Caco-2 (cell line): ENCODE measurements at regions of chr17 and their contacts with region 1.

Region 1: GRCh38 chr17:38617011-38617867 is 11.5 kb upstream of the SRCIN1 start:
- DNase-seq: no peak
- H3K4me3 ChIP-seq: no peak overlapping the region
- H3K4me3 Mint-ChIP-seq: no peak overlapping the region
- H3K27ac Mint-ChIP-seq: no peak overlapping the region
- H3K4me1 ChIP-seq: peaks cover 28% of the 10 kb centered on the region
- H3K4me1 Mint-ChIP-seq: peaks cover 36% of the 10 kb centered on the region
- H3K27me3 ChIP-seq: no peaks in the 10 kb centered on the region
- H3K27me3 Mint-ChIP-seq: no peaks in the 10 kb centered on the region
- CTCF ChIP-seq: peak in 1 of 2 experiments; percentile 13

Region 2: GRCh38 chr17:38598536-38598935 is 18.7 kb before region 1 on chr17:
- CTCF ChIA-PET with region 1: interaction called, 3 read pairs
- POLR2A ChIA-PET with region 1: interaction called, 14 read pairs
- intact Hi-C with region 1: loop called (anchors 1 kb)
- DNase-seq: peak; percentile 96
- H3K4me3 ChIP-seq: no peak overlapping the region
- H3K4me3 Mint-ChIP-seq: no peak overlapping the region
- H3K27ac Mint-ChIP-seq: peak overlapping the region; percentile 72
- H3K4me1 ChIP-seq: peaks cover 41% of the 10 kb centered on the region
- H3K4me1 Mint-ChIP-seq: peaks cover 35% of the 10 kb centered on the region
- H3K27me3 ChIP-seq: no peaks in the 10 kb centered on the region
- H3K27me3 Mint-ChIP-seq: no peaks in the 10 kb centered on the region
- CTCF ChIP-seq: no peak

Region 3: GRCh38 chr17:38605888-38606645 is 11.2 kb before region 1 on chr17 and contains the start of gene SRCIN1:
- CTCF ChIA-PET with region 1: interaction called, 14 read pairs
- POLR2A ChIA-PET with region 1: interaction called, 14 read pairs
- intact Hi-C with region 1: no loop called
- DNase-seq: peak; percentile 81 to 86
- H3K4me3 ChIP-seq: peak within 1 kb of the TSS; percentile 87
- H3K4me3 Mint-ChIP-seq: peak within 1 kb of the TSS; percentile 84
- H3K27ac Mint-ChIP-seq: peak within 1 kb of the TSS; percentile 91
- H3K4me1 ChIP-seq: peaks cover 32% of the 10 kb centered on the region
- H3K4me1 Mint-ChIP-seq: peaks cover 32% of the 10 kb centered on the region
- H3K27me3 ChIP-seq: no peaks in the 10 kb centered on the region
- H3K27me3 Mint-ChIP-seq: no peaks in the 10 kb centered on the region
- CTCF ChIP-seq: peak; percentile 98 to 100
- total RNA-seq, gene SRCIN1: 23.6 and 25.8 TPM in 2 replicates

Region 4: DNA sequence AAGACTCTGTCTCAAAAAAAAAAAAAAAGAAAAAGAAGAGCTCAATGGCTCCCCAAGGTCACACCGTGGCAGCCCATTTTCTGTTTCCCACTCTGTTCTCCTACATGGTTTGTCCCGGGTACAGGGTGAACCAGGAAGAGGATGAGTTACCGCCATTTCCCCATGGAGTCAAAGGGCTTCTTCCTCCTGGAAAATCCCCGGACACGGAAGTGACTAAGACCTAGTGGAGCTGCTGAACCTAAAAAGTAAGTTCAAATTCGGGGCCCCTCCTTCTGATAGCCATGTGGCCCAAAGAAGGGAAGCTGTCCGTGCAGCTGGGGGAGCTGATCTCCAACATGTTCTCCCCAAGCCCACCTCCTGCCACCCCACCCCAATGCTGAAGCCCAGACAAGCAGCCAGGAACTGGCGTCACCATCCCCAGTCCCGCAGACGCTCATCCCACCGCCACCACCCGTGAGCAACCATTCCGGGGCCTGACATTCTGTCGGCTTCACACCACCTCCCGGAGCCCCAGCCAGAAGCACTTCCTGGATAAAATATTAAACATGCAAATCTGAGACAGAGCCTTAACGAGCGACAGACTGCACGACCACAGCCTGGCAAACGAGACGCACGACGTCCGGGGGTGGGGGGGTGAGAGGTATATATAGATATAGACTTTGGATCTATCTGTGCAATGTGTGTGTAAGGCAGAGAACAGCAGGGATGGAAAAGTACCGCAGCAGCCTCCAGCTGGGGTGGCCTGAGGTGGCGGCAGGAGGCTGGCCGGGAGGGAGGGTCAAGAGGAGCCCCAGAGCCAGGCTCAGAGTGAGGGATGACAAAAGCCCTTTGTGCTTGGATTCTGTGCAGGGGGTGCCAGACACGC is 40.0 kb after region 1 on chr17:
- CTCF ChIA-PET with region 1: interaction called, 21 read pairs
- POLR2A ChIA-PET with region 1: interaction called, 5 read pairs
- intact Hi-C with region 1: loop called (anchors 2 kb)
- DNase-seq: peak; percentile 64 to 84
- H3K4me3 ChIP-seq: peak overlapping the region; percentile 33
- H3K4me3 Mint-ChIP-seq: peak overlapping the region; percentile 47
- H3K27ac Mint-ChIP-seq: peak overlapping the region; percentile 45
- H3K4me1 ChIP-seq: peaks cover 16% of the 10 kb centered on the region
- H3K4me1 Mint-ChIP-seq: peaks cover 6% of the 10 kb centered on the region
- H3K27me3 ChIP-seq: no peaks in the 10 kb centered on the region
- H3K27me3 Mint-ChIP-seq: no peaks in the 10 kb centered on the region
- CTCF ChIP-seq: no peak